GM10248 (cell line): ENCODE measurements at regions of chr1 and their contacts with region 1.

Region 1: DNA sequence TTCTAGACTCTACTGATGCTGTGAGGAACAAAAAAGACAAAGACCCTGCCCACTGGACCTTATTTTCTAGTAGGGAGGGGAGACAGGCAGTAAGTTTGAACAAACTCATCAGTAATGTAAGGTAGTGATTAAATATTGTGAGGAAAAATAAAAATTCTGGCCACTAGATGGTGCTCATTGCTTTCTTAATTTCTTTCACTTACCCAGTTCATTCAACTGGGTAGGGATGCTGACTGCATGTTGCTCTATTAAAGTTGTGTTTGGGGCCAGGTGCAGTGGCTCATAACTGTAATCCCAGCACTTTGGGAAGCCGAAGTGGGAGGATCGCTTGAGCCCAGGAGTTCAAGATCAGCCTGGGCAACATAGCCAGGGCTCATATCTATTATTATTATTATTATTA is 6.3 kb upstream of the KYAT3 start:
- DNase-seq: peak; percentile 50
- CTCF ChIP-seq: peak; percentile 34

Region 2: GRCh38 chr1:89125913-89126580 is 127.3 kb after region 1 on chr1 and contains the start of gene GBP2:
- CTCF ChIA-PET with region 1: interaction called, 3 read pairs
- POLR2A ChIA-PET with region 1: interaction called, 11 read pairs
- DNase-seq: peak; percentile 58
- CTCF ChIP-seq: no peak

Region 3: DNA sequence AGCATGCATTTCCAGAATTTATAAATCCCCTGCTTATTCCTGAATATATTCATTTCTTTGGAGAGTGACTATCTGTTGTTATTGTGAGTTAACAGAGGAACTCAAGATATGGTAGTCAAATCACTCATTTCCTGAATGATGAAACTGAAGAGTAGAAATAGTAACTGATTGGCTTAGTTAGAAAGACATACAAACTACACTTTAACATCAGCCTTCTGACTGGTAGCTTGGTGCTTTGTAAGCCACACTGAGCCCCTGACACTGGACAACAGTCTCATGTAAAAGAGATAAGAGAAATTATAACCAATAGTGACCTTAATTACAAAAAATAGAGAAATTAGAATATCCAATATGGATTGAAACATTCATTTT is 172.3 kb after region 1 on chr1:
- CTCF ChIA-PET with region 1: no interaction called
- POLR2A ChIA-PET with region 1: no interaction called
- DNase-seq: peak; percentile 14
- CTCF ChIP-seq: no peak

Region 4: DNA sequence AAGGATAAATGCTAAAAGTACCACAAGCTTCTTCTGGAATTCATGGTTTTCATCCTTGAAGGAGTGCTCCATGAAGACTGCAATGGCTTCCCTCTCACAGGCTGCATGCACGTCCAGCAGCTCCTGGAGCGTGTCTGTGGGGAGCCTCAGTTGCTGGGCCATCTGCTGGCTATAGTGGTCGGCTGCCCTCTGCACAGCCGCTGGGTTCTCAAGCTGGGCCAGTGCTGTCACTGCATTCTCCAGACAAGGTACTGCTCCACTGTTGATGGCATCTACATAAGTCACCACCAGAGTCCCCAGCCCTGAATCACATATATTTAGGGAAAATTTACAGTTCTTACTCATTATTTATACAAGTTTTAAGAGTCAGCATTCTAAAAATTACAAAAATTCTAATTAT is 191.3 kb after region 1 on chr1:
- CTCF ChIA-PET with region 1: no interaction called
- POLR2A ChIA-PET with region 1: no interaction called
- DNase-seq: no peak
- CTCF ChIP-seq: no peak

Region 5: DNA sequence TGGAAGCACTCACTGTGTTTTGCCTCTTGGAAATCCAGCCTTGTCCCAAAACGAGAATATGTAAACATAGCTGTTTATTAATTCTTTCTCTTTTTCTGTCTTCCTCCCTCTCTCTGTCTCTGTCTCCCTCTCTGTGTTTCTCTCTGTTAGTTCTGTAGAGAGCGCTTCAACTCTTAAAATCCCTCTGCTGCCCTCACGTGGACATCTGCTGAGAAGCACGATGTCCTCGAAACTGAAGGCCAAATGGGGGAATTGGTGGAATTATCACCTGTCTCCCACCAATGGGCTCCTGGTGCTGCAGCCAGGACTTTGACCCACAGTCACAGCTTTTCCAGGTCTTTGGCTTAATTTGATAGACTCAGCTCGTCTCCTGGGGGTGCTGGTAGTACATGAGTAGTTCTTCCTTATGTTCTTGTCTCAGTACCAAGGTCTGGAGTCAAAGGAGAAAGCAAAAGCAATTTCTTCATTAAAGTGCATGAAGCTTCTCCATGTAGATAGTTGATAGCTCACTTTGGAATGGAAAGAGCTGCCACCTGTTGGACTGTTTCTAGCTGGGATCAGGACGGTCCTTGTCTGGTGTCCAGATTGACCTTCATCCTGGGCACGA is 359.7 kb after region 1 on chr1:
- CTCF ChIA-PET with region 1: interaction called, 57 read pairs
- POLR2A ChIA-PET with region 1: interaction called, 6 read pairs
- DNase-seq: peak; percentile 51
- CTCF ChIP-seq: peak; percentile 86

Region 6: GRCh38 chr1:89454845-89455521 is 456.3 kb after region 1 on chr1:
- CTCF ChIA-PET with region 1: interaction called, 19 read pairs
- POLR2A ChIA-PET with region 1: no interaction called
- DNase-seq: peak; percentile 48
- CTCF ChIP-seq: peak; percentile 49